PC-3 (cell line): ENCODE measurements at regions of chr7 and their contacts with region 1.

Region 1: GRCh38 chr7:106313456-106313901 is 28.7 kb upstream of the NAMPT start:
- DNase-seq: peak; percentile 92
- ATAC-seq: peak; percentile 88
- H3K4me3 ChIP-seq: peak overlapping the region; percentile 41
- H3K27ac ChIP-seq: peak overlapping the region; percentile 72
- H3K4me1 ChIP-seq: peaks cover 50% of the 10 kb centered on the region
- H3K27me3 ChIP-seq: no peaks in the 10 kb centered on the region
- CTCF ChIP-seq: no peak

Region 2: GRCh38 chr7:105975770-105976422 is 337.6 kb before region 1 on chr7:
- CTCF ChIA-PET with region 1: no interaction called
- POLR2A ChIA-PET with region 1: no interaction called
- intact Hi-C with region 1: no loop called
- DNase-seq: no peak
- ATAC-seq: peak; percentile 31; the same call in 1 of the 2 replicates
- H3K4me3 ChIP-seq: no peak overlapping the region
- H3K27ac ChIP-seq: no peak overlapping the region
- H3K4me1 ChIP-seq: no peaks in the 10 kb centered on the region
- H3K27me3 ChIP-seq: peaks cover 8% of the 10 kb centered on the region; the same call in 1 of the 2 replicates
- CTCF ChIP-seq: no peak

Region 3: DNA sequence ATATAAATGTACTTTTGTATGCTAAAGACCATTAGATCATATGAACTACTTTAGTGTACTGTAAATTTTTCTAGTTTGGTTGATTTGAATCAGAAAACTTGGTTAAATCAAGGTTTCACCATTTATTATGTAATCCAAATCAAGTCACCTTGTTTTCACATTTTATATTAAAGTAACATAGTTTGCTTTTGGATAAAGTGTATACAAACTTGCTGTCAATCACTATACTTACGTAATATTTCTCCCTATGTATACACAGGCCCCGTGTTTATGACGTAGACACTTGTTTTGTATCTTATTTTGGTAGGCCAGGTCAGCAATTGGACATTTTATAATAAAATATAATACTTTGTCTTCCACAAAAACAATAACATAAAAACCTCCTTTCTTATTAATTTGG is 60.9 kb before region 1 on chr7:
- CTCF ChIA-PET with region 1: no interaction called
- POLR2A ChIA-PET with region 1: no interaction called
- intact Hi-C with region 1: loop called (anchors 2 kb)
- DNase-seq: no peak
- ATAC-seq: no peak
- H3K4me3 ChIP-seq: no peak overlapping the region
- H3K27ac ChIP-seq: no peak overlapping the region
- H3K4me1 ChIP-seq: no peaks in the 10 kb centered on the region
- H3K27me3 ChIP-seq: no peaks in the 10 kb centered on the region
- CTCF ChIP-seq: no peak

Region 4: DNA sequence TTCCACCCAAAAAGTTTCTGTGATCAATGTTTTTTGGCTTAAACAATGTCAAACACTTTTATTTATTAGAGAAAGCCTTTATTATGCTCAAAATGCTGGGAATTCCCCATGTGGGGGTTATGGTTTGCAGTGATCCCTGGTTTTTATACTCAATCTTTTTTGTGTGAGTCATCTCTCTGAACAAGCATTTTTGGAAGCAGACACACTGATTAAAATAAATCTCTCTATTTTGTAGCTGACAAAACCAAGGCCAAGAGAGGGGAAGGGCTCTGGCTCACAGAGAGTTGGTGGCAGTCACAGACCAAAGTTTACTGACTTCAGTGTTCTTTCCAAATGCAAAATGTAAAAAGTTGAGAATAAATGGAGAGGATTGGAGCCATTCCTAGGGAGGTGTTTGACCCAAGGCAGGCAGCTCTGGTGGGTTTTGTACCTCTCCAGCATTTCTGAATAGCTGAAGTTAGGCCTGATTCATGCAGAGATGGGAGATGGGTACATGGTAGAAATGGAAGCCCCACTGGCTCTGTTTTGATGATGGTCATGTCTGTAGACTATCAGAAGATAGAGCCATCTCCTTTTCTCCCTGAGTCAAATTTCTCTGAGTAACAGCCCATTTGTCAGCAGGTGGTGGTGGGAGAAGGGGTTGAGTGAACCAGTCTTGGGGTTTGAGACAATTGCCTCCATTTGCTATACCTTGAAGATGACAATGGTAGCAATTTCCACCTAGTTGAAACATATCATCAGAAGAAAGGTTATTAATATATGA is 16.7 kb after region 1 on chr7:
- CTCF ChIA-PET with region 1: no interaction called
- POLR2A ChIA-PET with region 1: no interaction called
- intact Hi-C with region 1: loop called (anchors 2 kb)
- DNase-seq: peak; percentile 74
- ATAC-seq: peak; percentile 92
- H3K4me3 ChIP-seq: no peak overlapping the region
- H3K27ac ChIP-seq: peak overlapping the region; percentile 23
- H3K4me1 ChIP-seq: peaks cover 17% of the 10 kb centered on the region
- H3K27me3 ChIP-seq: no peaks in the 10 kb centered on the region
- CTCF ChIP-seq: no peak

Region 5: GRCh38 chr7:106346678-106347217 is 33.3 kb after region 1 on chr7:
- CTCF ChIA-PET with region 1: no interaction called
- POLR2A ChIA-PET with region 1: no interaction called
- intact Hi-C with region 1: loop called (anchors 1 kb)
- DNase-seq: peak; percentile 98
- ATAC-seq: peak; percentile 91
- H3K4me3 ChIP-seq: no peak overlapping the region
- H3K27ac ChIP-seq: peak overlapping the region; percentile 52
- H3K4me1 ChIP-seq: peaks cover 28% of the 10 kb centered on the region
- H3K27me3 ChIP-seq: no peaks in the 10 kb centered on the region
- CTCF ChIP-seq: no peak